ENCODE measurements at regions of chr18 and their contacts with region 1.

Region 1: DNA sequence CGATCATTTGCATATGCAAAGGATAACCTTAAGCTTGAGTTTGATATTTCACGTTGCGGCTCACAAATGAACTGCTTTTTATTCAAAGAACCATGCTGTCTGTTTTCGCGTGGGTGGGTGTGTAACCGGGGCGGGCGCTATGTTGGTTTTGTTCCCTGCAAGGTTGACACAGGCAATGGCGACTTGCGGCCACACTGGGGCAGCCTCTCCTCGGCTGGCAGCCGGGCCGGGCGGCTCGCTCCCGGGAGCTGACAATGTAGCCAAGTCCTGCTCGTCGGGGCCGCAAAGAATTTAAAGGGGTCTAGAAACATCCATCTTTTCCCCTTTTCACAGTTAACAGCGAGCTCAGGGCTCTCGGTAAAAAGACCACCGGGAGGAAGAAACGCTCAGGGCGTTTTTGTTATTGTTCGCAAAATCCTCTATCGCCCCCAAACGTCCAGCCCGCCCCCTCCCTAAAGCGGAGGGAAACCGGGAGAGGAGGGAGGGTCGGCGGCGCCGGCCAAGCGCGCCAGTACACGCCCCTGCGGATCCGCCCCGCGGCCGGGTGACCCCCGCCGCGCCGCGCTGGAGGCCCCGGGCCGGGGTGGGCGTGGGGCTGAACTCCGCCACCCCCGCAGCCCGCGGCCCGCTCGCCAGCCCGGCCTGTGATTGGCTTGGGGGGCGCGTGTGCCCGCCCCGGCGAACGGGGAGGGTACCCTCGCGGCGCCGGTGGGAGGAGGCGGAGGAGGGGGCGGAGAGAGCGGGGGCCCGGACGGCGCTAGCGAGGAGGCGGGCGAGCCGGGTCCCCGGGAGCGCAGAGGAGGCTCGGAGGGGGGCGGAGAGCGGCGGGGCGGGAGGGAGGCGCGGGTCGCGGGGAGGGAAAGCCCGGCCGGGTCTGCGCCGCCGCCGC is at the start of gene NEDD4L:
- DNase-seq: peak; percentile 53
- ATAC-seq: peak; percentile 83
- H3K4me3 ChIP-seq: peak within 1 kb of the TSS; percentile 96
- H3K27ac ChIP-seq: peak within 1 kb of the TSS; percentile 37
- H3K4me1 ChIP-seq: peaks cover 6% of the 10 kb centered on the region; the same call in 1 of the 2 replicates
- H3K27me3 ChIP-seq: no peaks in the 10 kb centered on the region
- CTCF ChIP-seq: peak; percentile 80 to 91 (median 90)
- EP300 ChIP-seq: 0 out of 4 replicates have a peak, but pooled peaks of 1 of the 2 experiments have one; percentile 15
- POLR2A ChIP-seq: no peak
- RAD21 ChIP-seq: peak; percentile 83
- polyA plus RNA-seq, gene NEDD4L: 7.4 to 8.8 TPM

Region 2: GRCh38 chr18:57630002-57630753 is 413.6 kb before region 1 on chr18:
- CTCF ChIA-PET with region 1: interaction called, 9 read pairs
- POLR2A ChIA-PET with region 1: no interaction called
- RAD21 ChIA-PET with region 1: interaction called, 8 read pairs
- SMC1A ChIA-PET with region 1: interaction called, 4 read pairs
- in situ Hi-C with region 1: no loop called
- intact Hi-C with region 1: loop called (anchors 10 kb)
- DNase-seq: peak; percentile 65
- ATAC-seq: peak; percentile 93
- H3K4me3 ChIP-seq: peak overlapping the region; percentile 90
- H3K27ac ChIP-seq: peak overlapping the region; percentile 87
- H3K4me1 ChIP-seq: peaks cover 6% of the 10 kb centered on the region
- H3K27me3 ChIP-seq: no peaks in the 10 kb centered on the region
- CTCF ChIP-seq: peak; percentile 74 to 81 (median 78)
- EP300 ChIP-seq: no peak
- POLR2A ChIP-seq: peak; percentile 74
- RAD21 ChIP-seq: peak; percentile 82

Region 3: DNA sequence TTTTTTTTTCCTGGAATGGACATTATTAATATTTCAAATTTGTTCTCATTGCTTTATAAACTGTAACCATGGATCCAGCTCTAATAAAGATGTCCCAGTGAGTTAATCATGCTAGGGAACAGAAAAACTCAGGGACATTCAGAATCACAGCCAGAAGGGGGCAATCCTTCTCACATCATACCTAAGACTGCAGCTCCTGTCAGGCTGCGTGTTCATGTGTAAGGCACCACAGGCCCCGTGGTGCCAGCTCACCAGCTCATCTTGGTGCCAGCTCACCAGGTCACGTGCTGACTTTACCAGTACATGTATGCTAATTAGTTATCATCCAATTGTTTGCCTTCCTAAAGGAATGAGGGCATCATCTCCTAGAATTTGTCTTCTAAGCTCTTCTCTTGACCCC is 84.5 kb before region 1 on chr18:
- CTCF ChIA-PET with region 1: interaction called, 13 read pairs
- POLR2A ChIA-PET with region 1: no interaction called
- RAD21 ChIA-PET with region 1: interaction called, 15 read pairs
- SMC1A ChIA-PET with region 1: interaction called, 16 read pairs
- in situ Hi-C with region 1: no loop called
- intact Hi-C with region 1: loop called (anchors 2 kb)
- DNase-seq: no peak
- ATAC-seq: peak; percentile 86
- H3K4me3 ChIP-seq: no peak overlapping the region
- H3K27ac ChIP-seq: no peak overlapping the region
- H3K4me1 ChIP-seq: no peaks in the 10 kb centered on the region
- H3K27me3 ChIP-seq: 0 out of 4 replicates have a peak, but pooled peaks cover 0 to 2% of the 10 kb centered on the region in 2 experiments
- CTCF ChIP-seq: peak; percentile 45 to 54 (median 49); a peak in 5 of 6 replicates
- EP300 ChIP-seq: no peak
- POLR2A ChIP-seq: no peak
- RAD21 ChIP-seq: 0 out of 2 replicates have a peak, but pooled peaks have one; percentile 27

Region 4: GRCh38 chr18:58097121-58097906 is 53.6 kb after region 1 on chr18:
- CTCF ChIA-PET with region 1: interaction called, 6 read pairs
- POLR2A ChIA-PET with region 1: interaction called, 4 read pairs
- RAD21 ChIA-PET with region 1: interaction called, 10 read pairs
- SMC1A ChIA-PET with region 1: interaction called, 9 read pairs
- in situ Hi-C with region 1: no loop called
- intact Hi-C with region 1: no loop called
- DNase-seq: no peak
- ATAC-seq: no peak
- H3K4me3 ChIP-seq: no peak overlapping the region
- H3K27ac ChIP-seq: no peak overlapping the region
- H3K4me1 ChIP-seq: peaks cover 11% of the 10 kb centered on the region
- H3K27me3 ChIP-seq: no peaks in the 10 kb centered on the region
- CTCF ChIP-seq: no peak
- EP300 ChIP-seq: no peak
- POLR2A ChIP-seq: no peak
- RAD21 ChIP-seq: no peak

Region 5: DNA sequence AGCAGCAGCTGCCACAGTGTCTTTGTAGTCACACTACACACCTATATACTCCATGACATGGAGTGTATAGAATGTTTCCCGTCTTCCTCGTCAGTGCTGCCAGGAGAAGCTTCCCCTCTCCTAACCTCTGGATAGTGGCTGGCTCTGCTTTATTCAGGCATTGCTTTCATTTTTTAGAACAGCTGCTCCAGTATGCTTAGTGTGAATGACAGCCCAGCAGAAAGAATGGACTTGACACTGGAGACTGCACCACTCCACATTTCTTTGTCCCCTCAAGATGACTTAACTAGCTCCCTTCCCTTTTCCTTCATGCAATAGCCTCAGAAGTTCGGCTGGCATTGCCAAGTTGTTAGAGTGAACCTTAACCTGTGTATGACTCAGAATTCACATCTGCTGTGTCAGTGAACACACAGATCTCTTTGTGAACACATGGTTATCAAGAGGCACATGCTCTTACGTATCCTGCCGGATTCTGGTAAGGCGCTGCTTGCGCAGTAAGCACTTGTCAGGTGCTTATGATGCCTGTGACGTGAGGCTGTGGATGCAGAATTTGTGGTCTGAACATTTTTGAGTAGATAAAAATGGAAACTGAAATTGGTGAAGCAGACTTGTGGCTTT is 74.2 kb after region 1 on chr18:
- CTCF ChIA-PET with region 1: interaction called, 117 read pairs
- POLR2A ChIA-PET with region 1: interaction called, 5 read pairs
- RAD21 ChIA-PET with region 1: interaction called, 41 read pairs
- SMC1A ChIA-PET with region 1: interaction called, 37 read pairs
- in situ Hi-C with region 1: loop called (anchors 5 kb)
- intact Hi-C with region 1: loop called (anchors 1 kb)
- DNase-seq: no peak
- ATAC-seq: no peak
- H3K4me3 ChIP-seq: no peak overlapping the region
- H3K27ac ChIP-seq: no peak overlapping the region
- H3K4me1 ChIP-seq: peaks cover 9% of the 10 kb centered on the region
- H3K27me3 ChIP-seq: no peaks in the 10 kb centered on the region
- CTCF ChIP-seq: no peak
- EP300 ChIP-seq: no peak
- POLR2A ChIP-seq: no peak
- RAD21 ChIP-seq: no peak

Region 6: GRCh38 chr18:58180738-58181353 is 137.1 kb after region 1 on chr18:
- CTCF ChIA-PET with region 1: interaction called, 15 read pairs
- POLR2A ChIA-PET with region 1: no interaction called
- RAD21 ChIA-PET with region 1: interaction called, 9 read pairs
- SMC1A ChIA-PET with region 1: interaction called, 12 read pairs
- in situ Hi-C with region 1: no loop called
- intact Hi-C with region 1: loop called (anchors 1 kb)
- DNase-seq: no peak
- ATAC-seq: peak; percentile 86
- H3K4me3 ChIP-seq: no peak overlapping the region
- H3K27ac ChIP-seq: no peak overlapping the region
- H3K4me1 ChIP-seq: no peaks in the 10 kb centered on the region
- H3K27me3 ChIP-seq: no peaks in the 10 kb centered on the region
- CTCF ChIP-seq: peak; percentile 78 to 87 (median 78)
- EP300 ChIP-seq: no peak
- POLR2A ChIP-seq: no peak
- RAD21 ChIP-seq: peak; percentile 79

Region 7: GRCh38 chr18:58493516-58494253 is 449.9 kb after region 1 on chr18:
- CTCF ChIA-PET with region 1: interaction called, 13 read pairs
- POLR2A ChIA-PET with region 1: no interaction called
- RAD21 ChIA-PET with region 1: interaction called, 4 read pairs
- SMC1A ChIA-PET with region 1: interaction called, 3 read pairs
- in situ Hi-C with region 1: no loop called
- intact Hi-C with region 1: loop called (anchors 5 kb)
- DNase-seq: peak; percentile 28
- ATAC-seq: peak; percentile 94
- H3K4me3 ChIP-seq: no peak overlapping the region
- H3K27ac ChIP-seq: no peak overlapping the region
- H3K4me1 ChIP-seq: peaks cover 13% of the 10 kb centered on the region
- H3K27me3 ChIP-seq: no peaks in the 10 kb centered on the region
- CTCF ChIP-seq: peak; percentile 75 to 90 (median 85)
- EP300 ChIP-seq: no peak
- POLR2A ChIP-seq: no peak
- RAD21 ChIP-seq: peak; percentile 81